Adrenal gland (tissue), 19 donors: ENCODE measurements at regions of chr11 and their contacts with region 1.

Region 1: DNA sequence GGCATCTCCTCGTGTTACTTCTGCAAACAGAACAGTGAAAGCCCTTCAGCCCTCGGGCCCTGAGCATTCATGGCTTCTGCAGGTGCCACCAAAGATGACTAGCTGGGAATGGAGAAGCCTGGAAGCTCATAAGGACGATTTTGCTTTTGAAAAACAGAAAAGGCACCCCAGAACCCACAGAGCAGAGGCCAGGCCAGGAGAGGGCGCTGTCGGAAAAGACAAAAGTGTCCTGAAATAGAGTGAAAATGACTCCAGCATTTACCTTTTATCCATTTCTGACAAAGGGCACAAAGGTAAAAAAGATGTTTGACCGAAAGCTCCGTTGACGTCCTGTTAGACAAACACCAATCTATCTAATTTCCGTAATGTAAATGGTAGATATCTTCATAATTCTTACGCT is 37.6 kb downstream of the ZNF195 start:
- DNase-seq: peak; percentile 31 to 81 (median 58)
- H3K4me3 ChIP-seq: no peak overlapping the region
- H3K27ac ChIP-seq: no peak overlapping the region
- H3K4me1 ChIP-seq: no peaks in the 10 kb centered on the region
- H3K27me3 ChIP-seq: no peaks in the 10 kb centered on the region
- CTCF ChIP-seq: peak; percentile 49 to 75 (median 66)
- POLR2A ChIP-seq: no peak

Region 2: GRCh38 chr11:3135481-3136440 is 205.5 kb before region 1 on chr11:
- intact Hi-C with region 1: no loop called
- DNase-seq: peak in 2 of 7 donors; percentile 8 to 9
- H3K4me3 ChIP-seq: no peak overlapping the region
- H3K27ac ChIP-seq: no peak overlapping the region
- H3K4me1 ChIP-seq: peaks cover 0 to 3% of the 10 kb centered on the region in 2 donors
- H3K27me3 ChIP-seq: no peaks in the 10 kb centered on the region
- CTCF ChIP-seq: no peak
- POLR2A ChIP-seq: no peak

Region 3: GRCh38 chr11:3412837-3413236 is 71.5 kb after region 1 on chr11:
- intact Hi-C with region 1: loop called in 1 of 2 experiments (anchors 10 kb)
- DNase-seq: no peak
- H3K4me3 ChIP-seq: no peak overlapping the region
- H3K27ac ChIP-seq: no peak overlapping the region
- H3K4me1 ChIP-seq: no peaks in the 10 kb centered on the region
- H3K27me3 ChIP-seq: no peaks in the 10 kb centered on the region
- CTCF ChIP-seq: no peak
- POLR2A ChIP-seq: no peak